ENCODE measurements at regions of chr1 and their contacts with region 1.

Region 1: GRCh38 chr1:36149237-36149972 is at the start of gene TRAPPC3:
- DNase-seq: peak; percentile 100
- ATAC-seq: peak; percentile 92
- H3K4me3 Mint-ChIP-seq: peak within 1 kb of the TSS; percentile 93
- H3K27ac Mint-ChIP-seq: peak within 1 kb of the TSS; percentile 89
- H3K4me1 Mint-ChIP-seq: peaks cover 66% of the 10 kb centered on the region
- H3K27me3 Mint-ChIP-seq: no peaks in the 10 kb centered on the region
- total RNA-seq, gene TRAPPC3: 56.5 to 68.3 TPM

Region 2: GRCh38 chr1:36116901-36117300 is 32.5 kb before region 1 on chr1:
- CTCF ChIA-PET with region 1: interaction called, 10 read pairs
- DNase-seq: no peak
- ATAC-seq: no peak
- H3K4me3 Mint-ChIP-seq: no peak overlapping the region
- H3K27ac Mint-ChIP-seq: no peak overlapping the region
- H3K4me1 Mint-ChIP-seq: peaks cover 3% of the 10 kb centered on the region
- H3K27me3 Mint-ChIP-seq: peaks cover 5% of the 10 kb centered on the region

Region 3: GRCh38 chr1:36160949-36161485 is 11.6 kb after region 1 on chr1:
- CTCF ChIA-PET with region 1: interaction called, 102 read pairs
- DNase-seq: peak; percentile 89
- ATAC-seq: peak; percentile 52
- H3K4me3 Mint-ChIP-seq: peak overlapping the region; percentile 82
- H3K27ac Mint-ChIP-seq: peak overlapping the region; percentile 94
- H3K4me1 Mint-ChIP-seq: peaks cover 65% of the 10 kb centered on the region
- H3K27me3 Mint-ChIP-seq: no peaks in the 10 kb centered on the region

Region 4: DNA sequence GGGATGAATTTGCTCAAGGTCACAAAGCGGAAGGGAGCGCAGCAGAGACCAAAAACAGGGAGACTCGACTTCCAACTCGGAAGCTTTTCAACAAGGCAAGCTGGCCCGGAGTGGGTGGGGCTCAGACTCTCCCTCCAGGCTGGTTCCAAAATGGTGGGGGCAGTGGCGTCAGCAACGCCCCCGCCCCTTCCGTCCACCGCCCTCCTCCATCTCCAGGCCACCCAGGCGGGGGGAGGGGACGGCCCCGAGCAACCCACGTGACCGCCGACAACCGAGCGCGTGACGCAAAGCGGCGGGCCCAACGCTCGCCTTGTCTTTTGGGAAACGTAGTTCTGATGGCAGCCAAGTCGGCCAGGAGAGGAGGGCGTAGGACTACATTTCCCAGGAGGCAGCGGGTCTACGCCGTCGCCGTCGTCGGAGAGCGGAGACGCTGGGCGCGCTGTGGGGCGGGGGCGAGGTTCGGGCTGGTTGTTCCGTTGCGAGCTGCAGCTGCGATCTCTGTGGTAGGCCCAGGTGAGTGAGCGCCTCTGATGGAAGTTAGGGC is 74.7 kb after region 1 on chr1 and contains the start of gene THRAP3:
- CTCF ChIA-PET with region 1: interaction called, 36 read pairs
- DNase-seq: peak; percentile 100
- ATAC-seq: peak; percentile 92
- H3K4me3 Mint-ChIP-seq: peak within 1 kb of the TSS; percentile 94
- H3K27ac Mint-ChIP-seq: peak within 1 kb of the TSS; percentile 100
- H3K4me1 Mint-ChIP-seq: peaks cover 27% of the 10 kb centered on the region
- H3K27me3 Mint-ChIP-seq: no peaks in the 10 kb centered on the region
- total RNA-seq, gene THRAP3: 129 to 166 TPM

Region 5: DNA sequence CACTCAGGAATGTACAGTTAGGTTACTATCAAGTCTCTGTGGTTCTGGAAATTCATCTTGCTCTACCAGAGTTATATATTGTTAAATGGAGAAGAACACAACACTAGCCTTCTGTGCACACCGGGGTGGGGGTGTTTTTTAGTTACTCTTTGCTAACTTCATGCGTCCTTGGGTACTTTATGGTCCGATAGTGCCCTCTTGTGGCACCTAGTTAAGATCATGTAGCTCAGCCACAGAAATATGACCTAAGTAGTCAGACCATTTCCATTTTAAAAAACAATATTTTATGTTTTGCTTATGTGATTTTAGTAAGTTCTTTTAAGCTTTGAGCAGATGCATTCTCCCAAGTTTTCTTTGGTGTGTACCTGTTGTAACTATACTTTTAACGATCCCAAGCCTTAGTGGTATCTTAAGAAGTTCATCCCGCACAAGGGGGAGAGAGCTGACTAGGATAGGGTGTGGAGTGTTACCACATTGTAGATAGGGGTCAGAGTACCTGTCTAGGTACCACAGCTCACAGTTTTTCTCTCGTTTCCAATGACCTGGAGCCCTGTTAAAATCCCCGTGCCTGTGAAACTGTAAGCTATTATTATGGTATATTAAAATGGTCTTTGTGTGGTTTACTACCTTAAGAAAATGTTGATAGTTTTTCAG is 136.2 kb after region 1 on chr1:
- CTCF ChIA-PET with region 1: interaction called, 17 read pairs
- DNase-seq: peak; percentile 79
- ATAC-seq: peak; percentile 93
- H3K4me3 Mint-ChIP-seq: no peak overlapping the region
- H3K27ac Mint-ChIP-seq: peak overlapping the region; percentile 68
- H3K4me1 Mint-ChIP-seq: peaks cover 17% of the 10 kb centered on the region
- H3K27me3 Mint-ChIP-seq: no peaks in the 10 kb centered on the region

Region 6: DNA sequence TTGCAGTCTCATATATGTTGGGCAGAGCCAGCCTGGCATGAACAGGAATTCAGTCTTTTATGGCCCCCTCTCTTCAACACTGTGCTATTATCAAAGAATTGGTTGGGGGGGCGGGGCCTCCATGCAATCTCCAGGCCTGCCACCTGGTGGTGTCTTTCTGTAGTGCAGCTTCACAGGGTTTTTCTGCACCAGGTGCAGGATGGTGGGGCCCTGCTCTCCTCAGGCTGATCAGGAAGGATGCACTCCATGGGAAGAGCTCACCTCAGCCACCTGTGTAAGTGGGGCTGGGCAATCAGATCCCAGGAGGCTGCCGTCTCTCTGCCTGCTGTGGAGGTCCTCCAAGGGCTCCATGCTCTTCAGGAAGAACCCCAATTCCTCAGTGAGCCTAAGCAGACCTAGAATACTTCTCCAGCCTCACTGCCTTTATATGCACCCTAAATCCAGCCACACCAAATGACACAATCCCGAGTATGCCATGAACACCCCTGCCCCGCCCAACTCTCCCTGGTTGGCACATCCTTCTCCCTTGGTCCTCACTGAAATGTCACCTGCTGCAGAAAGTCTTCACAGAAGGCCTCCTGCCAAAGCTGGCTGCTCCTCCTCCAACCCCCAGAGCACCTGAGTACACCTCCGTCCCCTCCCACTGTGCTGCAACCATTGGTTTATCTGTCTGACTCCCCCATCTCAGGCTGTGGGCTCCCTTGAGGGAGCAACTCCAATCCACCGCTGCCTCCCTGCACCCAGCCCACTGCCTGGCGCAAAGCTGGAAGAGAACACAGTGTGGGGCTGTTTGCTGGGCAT is 219.9 kb after region 1 on chr1:
- CTCF ChIA-PET with region 1: interaction called, 14 read pairs
- DNase-seq: peak; percentile 88
- ATAC-seq: peak; percentile 48
- H3K4me3 Mint-ChIP-seq: no peak overlapping the region
- H3K27ac Mint-ChIP-seq: peak overlapping the region; percentile 71
- H3K4me1 Mint-ChIP-seq: peaks cover 67% of the 10 kb centered on the region
- H3K27me3 Mint-ChIP-seq: no peaks in the 10 kb centered on the region

Measured in activated CD8-positive, alpha-beta memory T cell treated with anti-CD3 and anti-CD28 coated beads, Interleukin-2, amount 10 ng/mL, durations not matched to agents 7 days and 5 days (primary cell).